Endothelial cell of umbilical vein (primary cell): ENCODE measurements at regions of chr5 and their contacts with region 1.

Region 1: GRCh38 chr5:36177715-36178523 is 26.0 kb downstream of the SKP2 start:
- DNase-seq: peak; percentile 54
- H3K4me3 ChIP-seq: no peak overlapping the region
- H3K27ac ChIP-seq: no peak overlapping the region
- H3K4me1 ChIP-seq: no peaks in the 10 kb centered on the region
- H3K27me3 ChIP-seq: no peaks in the 10 kb centered on the region
- CTCF ChIP-seq: peak; percentile 28 to 33
- POLR2A ChIP-seq: no peak

Region 2: DNA sequence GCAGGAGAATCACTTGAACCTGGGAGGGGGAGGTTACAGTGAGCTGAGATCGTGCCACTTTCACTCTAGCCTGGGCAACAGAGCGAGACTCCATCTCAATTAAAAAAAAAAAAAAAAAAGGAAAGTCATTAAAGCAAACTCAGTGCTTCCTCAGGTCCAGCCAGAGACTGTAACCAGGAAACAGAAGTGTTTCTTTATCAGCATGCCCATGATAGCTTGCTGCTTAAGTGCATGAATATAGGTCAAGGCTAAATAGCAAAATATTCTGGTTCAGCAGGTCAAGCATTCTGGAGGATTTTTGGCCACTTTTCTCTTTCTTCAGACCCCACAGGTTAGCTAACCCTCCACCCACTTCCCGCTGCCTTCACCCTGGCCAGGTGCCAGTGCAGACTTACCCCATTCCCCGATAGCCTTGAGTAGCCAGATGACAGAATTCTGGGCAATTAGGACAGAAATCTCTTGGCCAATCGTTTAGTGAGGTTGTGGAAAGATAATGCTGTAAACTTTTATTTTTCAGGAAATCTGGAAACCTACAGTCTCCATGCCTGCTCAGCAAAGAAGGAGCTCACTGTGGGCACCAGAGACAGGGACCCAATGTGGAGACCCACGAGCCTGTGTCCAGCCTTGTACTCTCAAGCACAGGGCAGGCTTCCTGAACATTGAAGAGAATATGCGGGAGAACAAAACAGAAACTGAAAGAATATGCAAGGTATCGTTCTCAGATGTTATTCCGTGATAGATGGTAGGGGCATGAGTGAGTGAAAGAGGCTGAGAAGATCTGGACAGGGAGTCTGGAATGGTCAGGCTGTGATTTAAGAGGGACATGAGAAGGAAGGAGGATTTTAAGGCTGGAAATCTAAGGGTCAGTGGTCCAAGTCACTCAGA is 107.0 kb before region 1 on chr5:
- CTCF ChIA-PET with region 1: no interaction called
- POLR2A ChIA-PET with region 1: no interaction called
- dilution Hi-C with region 1: no loop called
- intact Hi-C with region 1: no loop called
- DNase-seq: peak; percentile 20
- H3K4me3 ChIP-seq: no peak overlapping the region
- H3K27ac ChIP-seq: no peak overlapping the region
- H3K4me1 ChIP-seq: no peaks in the 10 kb centered on the region
- H3K27me3 ChIP-seq: peaks cover 4 to 5% of the 10 kb centered on the region in 2 experiments
- CTCF ChIP-seq: no peak
- POLR2A ChIP-seq: no peak

Region 3: DNA sequence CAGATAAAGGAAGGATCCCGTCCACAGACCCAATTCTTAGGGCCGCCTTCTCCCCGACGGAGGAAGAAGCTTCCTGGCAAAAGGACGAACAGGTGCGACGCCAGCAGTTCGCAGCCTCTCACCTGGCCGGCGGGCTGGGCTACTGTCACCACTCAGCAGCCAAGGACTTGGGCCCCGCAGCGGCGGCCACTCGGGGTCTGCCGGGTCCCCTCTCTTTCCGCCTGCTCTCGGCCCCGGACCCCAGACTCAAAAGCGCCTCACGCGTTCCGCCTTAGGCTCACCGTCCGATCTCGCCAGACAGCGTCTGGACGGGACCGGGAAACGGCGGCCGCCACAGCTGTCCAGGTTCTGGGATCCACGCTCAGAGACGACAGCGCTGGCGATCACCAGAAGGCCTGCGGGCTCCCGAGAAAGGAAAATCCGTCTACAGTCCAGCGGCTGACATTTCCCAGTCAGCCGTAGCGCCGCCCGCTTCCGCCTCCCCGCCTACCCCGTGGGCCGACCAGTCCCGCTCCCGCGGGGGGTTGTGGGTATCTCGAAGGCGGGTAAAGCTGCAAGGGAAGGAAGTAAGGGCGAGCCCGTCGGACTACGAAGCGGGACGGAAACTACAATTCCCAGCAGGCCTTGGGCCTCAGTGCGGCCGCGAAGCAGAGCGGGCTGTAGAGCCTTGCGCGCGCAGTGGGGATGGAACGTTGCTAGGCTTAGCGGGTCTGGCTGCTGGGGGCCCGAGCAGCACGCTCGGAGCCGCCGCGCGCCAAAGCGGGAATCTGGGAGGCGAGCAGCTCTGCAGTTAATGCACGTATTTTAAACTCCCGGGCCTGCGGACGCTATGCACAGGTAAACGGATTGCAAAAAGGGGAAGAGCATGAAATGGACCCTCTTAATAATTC is 26.2 kb before region 1 on chr5 and contains the starts of genes LMBRD2 and SKP2:
- CTCF ChIA-PET with region 1: interaction called, 17 read pairs
- POLR2A ChIA-PET with region 1: no interaction called
- dilution Hi-C with region 1: no loop called
- intact Hi-C with region 1: loop called (anchors 2 kb)
- DNase-seq: peak; percentile 99
- H3K4me3 ChIP-seq: peak within 1 kb of the TSS; percentile 70 to 84 (median 73)
- H3K27ac ChIP-seq: peak within 1 kb of the TSS; percentile 21
- H3K4me1 ChIP-seq: peaks cover 24% of the 10 kb centered on the region
- H3K27me3 ChIP-seq: no peaks in the 10 kb centered on the region
- CTCF ChIP-seq: no peak
- POLR2A ChIP-seq: peak; percentile 80
- total RNA-seq, gene LMBRD2: 5.2 and 6.6 TPM in 2 replicates
- total RNA-seq, gene SKP2: 40.9 and 42.0 TPM in 2 replicates

Region 4: GRCh38 chr5:36241631-36242533 is 64.0 kb after region 1 on chr5 and contains the start of gene NADK2:
- CTCF ChIA-PET with region 1: interaction called, 44 read pairs
- POLR2A ChIA-PET with region 1: no interaction called
- dilution Hi-C with region 1: no loop called
- intact Hi-C with region 1: loop called (anchors 2 kb)
- DNase-seq: peak; percentile 98
- H3K4me3 ChIP-seq: peak within 1 kb of the TSS; percentile 46 to 59 (median 49)
- H3K27ac ChIP-seq: peak within 1 kb of the TSS; percentile 71
- H3K4me1 ChIP-seq: peaks cover 16% of the 10 kb centered on the region
- H3K27me3 ChIP-seq: no peaks in the 10 kb centered on the region
- CTCF ChIP-seq: peak; percentile 58 to 79
- POLR2A ChIP-seq: peak; percentile 83
- total RNA-seq, gene NADK2: 18.2 and 20.3 TPM in 2 replicates

Region 5: DNA sequence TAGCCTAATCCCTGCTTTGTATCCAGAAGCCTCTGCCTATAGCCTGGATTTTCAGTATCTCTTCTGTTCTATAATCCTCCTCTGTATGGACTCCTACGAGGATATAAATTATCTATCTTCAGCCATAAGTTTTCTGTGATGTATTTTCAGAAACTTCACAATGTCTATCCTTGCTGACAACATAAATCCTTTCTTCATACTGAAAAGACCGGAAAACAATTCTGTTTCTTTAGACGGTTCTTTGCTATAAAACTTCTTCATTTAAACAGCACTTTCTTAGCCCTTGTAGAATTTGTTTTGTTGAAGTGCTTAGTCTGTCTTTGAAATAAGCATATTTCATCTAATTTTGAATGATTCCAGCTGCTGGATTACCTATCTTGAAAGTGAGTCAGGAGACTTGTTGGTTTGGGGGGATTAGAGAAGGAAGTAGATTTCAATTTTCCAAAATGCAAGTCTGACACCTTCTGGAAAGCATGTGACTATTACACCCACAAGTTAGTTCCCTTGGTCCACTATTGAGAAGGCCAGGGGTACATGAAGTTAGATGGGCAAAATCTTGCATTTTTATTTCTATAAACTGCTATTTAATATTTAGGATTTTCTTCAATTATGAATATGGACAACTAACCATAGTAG is 220.1 kb after region 1 on chr5:
- CTCF ChIA-PET with region 1: no interaction called
- POLR2A ChIA-PET with region 1: no interaction called
- dilution Hi-C with region 1: no loop called
- intact Hi-C with region 1: loop called (anchors 10 kb)
- DNase-seq: no peak
- H3K4me3 ChIP-seq: no peak overlapping the region
- H3K27ac ChIP-seq: no peak overlapping the region
- H3K4me1 ChIP-seq: no peaks in the 10 kb centered on the region
- H3K27me3 ChIP-seq: no peaks in the 10 kb centered on the region
- CTCF ChIP-seq: no peak
- POLR2A ChIP-seq: no peak

Region 6: GRCh38 chr5:36690041-36690961 is 512.4 kb after region 1 on chr5:
- CTCF ChIA-PET with region 1: interaction called, 20 read pairs
- POLR2A ChIA-PET with region 1: no interaction called
- dilution Hi-C with region 1: no loop called
- intact Hi-C with region 1: loop called (anchors 1 kb)
- DNase-seq: peak; percentile 48
- H3K4me3 ChIP-seq: peak overlapping the region; percentile 16 to 36 (median 28)
- H3K27ac ChIP-seq: no peak overlapping the region
- H3K4me1 ChIP-seq: no peaks in the 10 kb centered on the region
- H3K27me3 ChIP-seq: peaks cover 2 to 3% of the 10 kb centered on the region in 2 experiments
- CTCF ChIP-seq: peak; percentile 82 to 92
- POLR2A ChIP-seq: no peak